Breast epithelium (tissue), 4 donors: ENCODE measurements at regions of chr2 and their contacts with region 1.

Region 1: GRCh38 chr2:127541809-127542208 is 6.3 kb downstream of the MYO7B start:
- DNase-seq: no peak
- H3K4me3 ChIP-seq: no peak overlapping the region
- H3K27ac ChIP-seq: no peak overlapping the region
- H3K4me1 ChIP-seq: no peaks in the 10 kb centered on the region
- H3K27me3 ChIP-seq: no peaks in the 10 kb centered on the region
- CTCF ChIP-seq: no peak
- POLR2A ChIP-seq: peak; percentile 8

Region 2: GRCh38 chr2:126299526-126299925 is 1242.3 kb before region 1 on chr2:
- intact Hi-C with region 1: loop called (anchors 10 kb)
- DNase-seq: no peak
- H3K4me3 ChIP-seq: no peak overlapping the region
- H3K27ac ChIP-seq: no peak overlapping the region
- H3K4me1 ChIP-seq: no peaks in the 10 kb centered on the region
- H3K27me3 ChIP-seq: no peaks in the 10 kb centered on the region
- CTCF ChIP-seq: no peak
- POLR2A ChIP-seq: no peak

Region 3: DNA sequence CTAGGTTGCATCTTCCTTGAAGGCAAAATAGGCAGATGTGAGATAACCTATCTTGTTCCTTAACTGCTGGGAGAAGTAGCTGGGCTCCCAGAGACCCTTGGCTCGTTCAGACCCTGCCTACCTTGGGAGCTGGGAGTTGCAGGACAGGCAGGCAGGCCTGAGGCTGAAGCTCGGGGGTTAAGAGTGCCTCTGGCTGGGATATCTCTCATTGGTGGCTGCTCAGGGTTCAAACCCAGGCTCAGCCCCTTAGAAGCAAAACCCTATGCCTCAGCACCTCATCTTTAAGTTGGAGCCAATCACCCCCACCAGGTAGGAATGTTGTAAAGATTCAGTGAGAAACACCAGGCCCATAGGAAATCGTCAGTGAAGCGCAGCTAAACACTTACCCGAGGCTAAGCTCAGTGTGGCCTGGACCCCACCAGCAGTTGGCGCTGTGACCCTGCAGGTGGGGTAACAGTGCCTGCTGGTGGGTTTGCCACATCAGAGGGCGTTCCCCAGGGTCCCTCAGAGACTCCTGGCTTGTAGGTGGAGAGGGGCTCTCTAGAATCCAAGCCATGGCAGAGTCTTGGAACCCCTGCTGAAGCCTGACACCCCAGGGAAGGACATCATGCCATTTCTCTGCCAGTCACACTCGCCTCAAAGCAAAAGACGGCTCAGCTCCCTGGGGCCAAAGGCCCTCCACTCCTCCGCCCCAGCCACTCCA is 49.6 kb after region 1 on chr2:
- intact Hi-C with region 1: no loop called
- DNase-seq: no peak
- H3K4me3 ChIP-seq: no peak overlapping the region
- H3K27ac ChIP-seq: no peak overlapping the region
- H3K4me1 ChIP-seq: no peaks in the 10 kb centered on the region
- H3K27me3 ChIP-seq: no peaks in the 10 kb centered on the region
- CTCF ChIP-seq: peak in 2 of 3 donors; percentile 13 to 24
- POLR2A ChIP-seq: no peak

Region 4: GRCh38 chr2:127753374-127753773 is 211.6 kb after region 1 on chr2:
- intact Hi-C with region 1: no loop called
- DNase-seq: no peak
- H3K4me3 ChIP-seq: no peak overlapping the region
- H3K27ac ChIP-seq: no peak overlapping the region
- H3K4me1 ChIP-seq: no peaks in the 10 kb centered on the region
- H3K27me3 ChIP-seq: no peaks in the 10 kb centered on the region
- CTCF ChIP-seq: no peak
- POLR2A ChIP-seq: no peak

Region 5: GRCh38 chr2:129144082-129144791 is 1602.4 kb after region 1 on chr2:
- intact Hi-C with region 1: no loop called
- DNase-seq: no peak
- H3K4me3 ChIP-seq: no peak overlapping the region
- H3K27ac ChIP-seq: no peak overlapping the region
- H3K4me1 ChIP-seq: no peaks in the 10 kb centered on the region
- H3K27me3 ChIP-seq: no peaks in the 10 kb centered on the region
- CTCF ChIP-seq: no peak
- POLR2A ChIP-seq: no peak